ENCODE measurements at regions of chr4 and their contacts with region 1.

Region 1: GRCh38 chr4:73258686-73259570 is at the start of gene ANKRD17:
- DNase-seq: peak; percentile 82 to 92 (median 89)
- ATAC-seq: peak; percentile 87
- H3K4me3 ChIP-seq: peak within 1 kb of the TSS; percentile 81
- H3K4me3 Mint-ChIP-seq: peak within 1 kb of the TSS; percentile 98 to 100 (median 99)
- H3K27ac ChIP-seq: peak within 1 kb of the TSS; percentile 98
- H3K27ac Mint-ChIP-seq: peak within 1 kb of the TSS; percentile 99 to 100 (median 100)
- H3K4me1 ChIP-seq: peaks cover 6 to 44% of the 10 kb centered on the region in 2 donors
- H3K4me1 Mint-ChIP-seq: peaks cover 37 to 90% (median 65%) of the 10 kb centered on the region in 7 donors
- H3K27me3 ChIP-seq: no peaks in the 10 kb centered on the region
- H3K27me3 Mint-ChIP-seq: no peaks in the 10 kb centered on the region
- total RNA-seq, gene ANKRD17: 54.4 to 67.5 (median 59.6) TPM

Region 2: DNA sequence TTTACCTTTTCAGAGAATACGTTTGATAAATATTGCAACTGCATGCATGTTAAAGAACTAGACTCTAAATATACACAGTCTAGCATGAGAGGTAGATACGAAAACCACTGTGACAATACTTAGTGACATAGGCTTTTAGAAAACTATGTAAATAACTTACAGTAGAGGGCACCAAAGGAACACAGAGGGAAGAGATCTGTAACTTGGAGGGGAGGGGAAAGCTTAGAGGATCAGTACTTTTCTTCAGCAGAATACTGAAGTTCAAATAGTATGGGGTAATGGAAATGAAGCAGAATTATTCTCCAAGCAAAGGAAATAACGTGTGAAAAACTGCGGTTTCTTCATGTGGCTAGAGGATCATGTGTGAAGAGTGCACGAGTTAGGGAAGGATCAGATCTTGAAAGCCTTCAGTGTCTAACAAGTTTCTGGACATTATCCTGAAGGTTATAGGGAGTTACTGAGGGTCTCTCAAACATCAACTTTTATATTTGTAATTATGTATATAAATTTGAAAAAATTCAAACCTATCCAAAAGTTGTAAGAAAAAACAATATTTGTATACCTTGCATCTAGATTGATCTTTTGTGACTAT is 962.9 kb before region 1 on chr4:
- CTCF ChIA-PET with region 1: no interaction called
- POLR2A ChIA-PET with region 1: no interaction called
- intact Hi-C with region 1: loop called in 1 of 2 experiments (anchors 5 kb)
- DNase-seq: peak in 2 of 9 donors; percentile 2 to 19
- ATAC-seq: no peak
- H3K4me3 ChIP-seq: no peak overlapping the region
- H3K4me3 Mint-ChIP-seq: no peak overlapping the region
- H3K27ac ChIP-seq: no peak overlapping the region
- H3K27ac Mint-ChIP-seq: no peak overlapping the region
- H3K4me1 ChIP-seq: no peaks in the 10 kb centered on the region
- H3K4me1 Mint-ChIP-seq: peaks cover 0 to 3% (median 0%) of the 10 kb centered on the region in 7 donors
- H3K27me3 ChIP-seq: no peaks in the 10 kb centered on the region
- H3K27me3 Mint-ChIP-seq: peaks cover 3 to 21% (median 9%) of the 10 kb centered on the region in 5 donors

Region 3: GRCh38 chr4:72701987-72702819 is 556.7 kb before region 1 on chr4:
- CTCF ChIA-PET with region 1: interaction called, 3 read pairs
- POLR2A ChIA-PET with region 1: no interaction called
- intact Hi-C with region 1: loop called (anchors 1 kb)
- DNase-seq: peak in 6 of 9 donors; percentile 10 to 32 (median 22)
- ATAC-seq: peak; percentile 56
- H3K4me3 ChIP-seq: no peak overlapping the region
- H3K4me3 Mint-ChIP-seq: peak overlapping the region in 9 of 10 donors; percentile 42 to 85 (median 83)
- H3K27ac ChIP-seq: no peak overlapping the region
- H3K27ac Mint-ChIP-seq: peak overlapping the region in 2 of 9 donors; percentile 3 to 71
- H3K4me1 ChIP-seq: no peaks in the 10 kb centered on the region
- H3K4me1 Mint-ChIP-seq: peaks cover 0 to 6% (median 0%) of the 10 kb centered on the region in 7 donors
- H3K27me3 ChIP-seq: no peaks in the 10 kb centered on the region
- H3K27me3 Mint-ChIP-seq: peaks cover 0 to 14% (median 6%) of the 10 kb centered on the region in 5 donors

Region 4: GRCh38 chr4:73086095-73086868 is 172.6 kb before region 1 on chr4:
- CTCF ChIA-PET with region 1: no interaction called
- POLR2A ChIA-PET with region 1: interaction called, 3 read pairs
- intact Hi-C with region 1: loop called in 1 of 2 experiments (anchors 5 kb)
- DNase-seq: peak in 1 of 9 donors; percentile 4
- ATAC-seq: no peak
- H3K4me3 ChIP-seq: peak overlapping the region; percentile 25
- H3K4me3 Mint-ChIP-seq: peak overlapping the region; percentile 60 to 76 (median 72)
- H3K27ac ChIP-seq: peak overlapping the region; percentile 65
- H3K27ac Mint-ChIP-seq: peak overlapping the region; percentile 38 to 80 (median 63)
- H3K4me1 ChIP-seq: no peaks in the 10 kb centered on the region
- H3K4me1 Mint-ChIP-seq: peaks cover 10 to 28% (median 16%) of the 10 kb centered on the region in 7 donors
- H3K27me3 ChIP-seq: no peaks in the 10 kb centered on the region
- H3K27me3 Mint-ChIP-seq: no peaks in the 10 kb centered on the region

Region 5: GRCh38 chr4:73187325-73187724 is 71.6 kb before region 1 on chr4:
- CTCF ChIA-PET with region 1: no interaction called
- POLR2A ChIA-PET with region 1: no interaction called
- intact Hi-C with region 1: loop called in 1 of 2 experiments (anchors 2 kb)
- DNase-seq: no peak
- ATAC-seq: peak; percentile 26
- H3K4me3 ChIP-seq: no peak overlapping the region
- H3K4me3 Mint-ChIP-seq: no peak overlapping the region
- H3K27ac ChIP-seq: no peak overlapping the region
- H3K27ac Mint-ChIP-seq: no peak overlapping the region
- H3K4me1 ChIP-seq: no peaks in the 10 kb centered on the region
- H3K4me1 Mint-ChIP-seq: peaks cover 14 to 61% (median 51%) of the 10 kb centered on the region in 7 donors
- H3K27me3 ChIP-seq: no peaks in the 10 kb centered on the region
- H3K27me3 Mint-ChIP-seq: no peaks in the 10 kb centered on the region

Region 6: DNA sequence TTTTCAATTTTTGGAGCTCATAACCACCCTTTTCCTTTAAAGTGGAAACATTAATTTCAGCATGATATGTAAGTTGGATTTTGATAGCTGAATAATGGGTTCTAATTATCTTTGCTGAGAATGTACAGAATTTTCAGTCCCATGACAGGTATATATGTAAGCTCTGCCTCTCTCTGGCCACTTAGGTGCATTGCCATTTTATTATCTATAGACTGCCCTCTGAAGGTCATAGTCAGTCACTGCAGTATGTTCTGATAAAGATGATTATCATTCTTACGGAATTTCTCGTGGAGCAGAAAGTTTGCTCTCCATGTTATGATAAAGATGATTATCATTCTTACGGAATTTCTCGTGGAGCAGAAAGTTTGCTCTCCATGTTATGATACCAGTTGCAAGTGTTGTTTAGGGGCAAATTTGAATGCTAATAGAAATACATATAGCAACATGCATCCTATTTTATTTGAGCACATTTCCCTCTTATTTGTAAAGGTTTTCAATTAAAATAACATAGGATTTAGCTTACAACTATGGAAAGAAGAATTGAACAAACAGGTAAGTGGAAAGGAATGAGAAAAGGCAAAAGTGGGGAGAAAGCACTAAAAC is 187.5 kb after region 1 on chr4:
- CTCF ChIA-PET with region 1: no interaction called
- POLR2A ChIA-PET with region 1: no interaction called
- intact Hi-C with region 1: loop called in 1 of 2 experiments (anchors 1 kb)
- DNase-seq: peak in 5 of 9 donors; percentile 1 to 35 (median 18)
- ATAC-seq: peak; percentile 86
- H3K4me3 ChIP-seq: no peak overlapping the region
- H3K4me3 Mint-ChIP-seq: no peak overlapping the region
- H3K27ac ChIP-seq: no peak overlapping the region
- H3K27ac Mint-ChIP-seq: no peak overlapping the region
- H3K4me1 ChIP-seq: no peaks in the 10 kb centered on the region
- H3K4me1 Mint-ChIP-seq: no peaks in the 10 kb centered on the region
- H3K27me3 ChIP-seq: peaks cover 0 to 5% of the 10 kb centered on the region in 2 donors
- H3K27me3 Mint-ChIP-seq: peaks cover 2 to 25% (median 16%) of the 10 kb centered on the region in 5 donors

Region 7: GRCh38 chr4:74444891-74445642 is 1186.1 kb after region 1 on chr4 and contains the start of gene AREG:
- CTCF ChIA-PET with region 1: no interaction called
- POLR2A ChIA-PET with region 1: no interaction called
- intact Hi-C with region 1: loop called in 1 of 2 experiments (anchors 1 kb)
- DNase-seq: peak; percentile 85 to 96 (median 94)
- ATAC-seq: peak; percentile 97
- H3K4me3 ChIP-seq: peak within 1 kb of the TSS; percentile 63
- H3K4me3 Mint-ChIP-seq: peak within 1 kb of the TSS; percentile 84 to 96 (median 92)
- H3K27ac ChIP-seq: peak within 1 kb of the TSS; percentile 93
- H3K27ac Mint-ChIP-seq: peak within 1 kb of the TSS; percentile 74 to 99 (median 97)
- H3K4me1 ChIP-seq: peaks cover 0 to 6% of the 10 kb centered on the region in 2 donors
- H3K4me1 Mint-ChIP-seq: peaks cover 4 to 15% (median 14%) of the 10 kb centered on the region in 7 donors
- H3K27me3 ChIP-seq: no peaks in the 10 kb centered on the region
- H3K27me3 Mint-ChIP-seq: peaks cover 0 to 13% (median 0%) of the 10 kb centered on the region in 5 donors
- total RNA-seq, gene AREG: 0.36 to 30.5 (median 6.7) TPM in 4 of 5 experiments, not detected in the other

Measured in naive thymus-derived CD4-positive, alpha-beta T cell (primary cell).